ENCODE measurements at regions of chr2 and their contacts with region 1.

Region 1: GRCh38 chr2:69715964-69716363 is 26.0 kb upstream of the ANXA4 start:
- DNase-seq: no peak
- ATAC-seq: no peak
- H3K4me3 ChIP-seq: no peak overlapping the region
- H3K4me3 Mint-ChIP-seq: no peak overlapping the region
- H3K27ac ChIP-seq: no peak overlapping the region
- H3K27ac Mint-ChIP-seq: no peak overlapping the region
- H3K4me1 ChIP-seq: peaks cover 6% of the 10 kb centered on the region
- H3K4me1 Mint-ChIP-seq: peaks cover 6 to 7% of the 10 kb centered on the region in 2 donors
- H3K27me3 ChIP-seq: no peaks in the 10 kb centered on the region
- H3K27me3 Mint-ChIP-seq: no peaks in the 10 kb centered on the region
- CTCF ChIP-seq: no peak

Region 2: DNA sequence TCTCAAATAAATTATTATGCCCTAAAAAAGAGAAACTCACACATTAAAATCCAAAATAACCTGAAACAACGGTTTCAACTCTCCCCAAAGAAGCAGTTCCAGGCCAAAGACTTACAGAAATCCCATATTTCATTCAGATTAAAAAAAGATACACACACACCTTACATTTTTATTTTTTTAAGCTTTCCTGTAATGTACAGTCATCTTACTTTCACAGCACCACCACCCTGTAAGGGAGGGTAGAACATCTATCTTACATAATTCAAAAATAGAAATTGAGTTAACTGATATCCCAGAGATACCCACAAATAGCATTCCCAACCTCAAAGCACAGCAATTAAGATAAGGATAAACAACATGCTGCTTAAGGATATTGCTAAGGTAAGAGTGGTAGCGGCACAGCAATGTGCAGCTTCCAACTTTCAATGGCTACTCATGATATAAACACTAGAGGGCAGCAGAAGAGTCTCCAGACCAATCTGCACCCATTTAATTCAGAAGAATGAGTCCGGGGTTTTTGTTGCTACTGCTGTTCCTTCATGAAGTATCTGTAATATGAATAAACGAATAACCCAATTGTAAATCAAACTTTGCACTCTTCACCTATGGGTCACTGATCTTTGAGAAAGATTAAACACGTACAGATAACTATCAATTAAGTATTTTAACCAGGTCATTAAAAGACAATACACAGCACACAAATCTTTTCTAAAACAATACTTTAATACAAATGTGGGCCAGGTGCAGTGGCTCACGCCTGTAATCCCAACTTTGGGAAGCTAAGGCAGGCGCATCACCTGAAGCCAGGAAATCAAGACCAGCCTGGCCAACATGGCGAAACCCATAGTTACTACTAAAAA is 340.2 kb before region 1 on chr2:
- intact Hi-C with region 1: loop called (anchors 2 kb)
- DNase-seq: peak in 1 of 2 donors; percentile 60
- ATAC-seq: peak; percentile 55 to 70 (median 68)
- H3K4me3 ChIP-seq: no peak overlapping the region
- H3K4me3 Mint-ChIP-seq: no peak overlapping the region
- H3K27ac ChIP-seq: no peak overlapping the region
- H3K27ac Mint-ChIP-seq: peak overlapping the region; percentile 7 to 37
- H3K4me1 ChIP-seq: no peaks in the 10 kb centered on the region
- H3K4me1 Mint-ChIP-seq: peaks cover 9 to 17% of the 10 kb centered on the region in 2 donors
- H3K27me3 ChIP-seq: no peaks in the 10 kb centered on the region
- H3K27me3 Mint-ChIP-seq: no peaks in the 10 kb centered on the region
- CTCF ChIP-seq: peak; percentile 71

Region 3: GRCh38 chr2:69436938-69437750 is 278.8 kb before region 1 on chr2 and contains the start of gene NFU1:
- intact Hi-C with region 1: loop called (anchors 5 kb)
- DNase-seq: peak; percentile 89 to 93
- ATAC-seq: peak; percentile 89 to 94 (median 89)
- H3K4me3 ChIP-seq: peak within 1 kb of the TSS; percentile 88
- H3K4me3 Mint-ChIP-seq: peak within 1 kb of the TSS; percentile 94
- H3K27ac ChIP-seq: peak within 1 kb of the TSS; percentile 90
- H3K27ac Mint-ChIP-seq: peak within 1 kb of the TSS; percentile 96 to 98
- H3K4me1 ChIP-seq: peaks cover 20% of the 10 kb centered on the region
- H3K4me1 Mint-ChIP-seq: peaks cover 29 to 36% of the 10 kb centered on the region in 2 donors
- H3K27me3 ChIP-seq: no peaks in the 10 kb centered on the region
- H3K27me3 Mint-ChIP-seq: no peaks in the 10 kb centered on the region
- CTCF ChIP-seq: peak; percentile 28
- total RNA-seq, gene NFU1: 21.4 to 25.0 (median 23.6) TPM

Region 4: DNA sequence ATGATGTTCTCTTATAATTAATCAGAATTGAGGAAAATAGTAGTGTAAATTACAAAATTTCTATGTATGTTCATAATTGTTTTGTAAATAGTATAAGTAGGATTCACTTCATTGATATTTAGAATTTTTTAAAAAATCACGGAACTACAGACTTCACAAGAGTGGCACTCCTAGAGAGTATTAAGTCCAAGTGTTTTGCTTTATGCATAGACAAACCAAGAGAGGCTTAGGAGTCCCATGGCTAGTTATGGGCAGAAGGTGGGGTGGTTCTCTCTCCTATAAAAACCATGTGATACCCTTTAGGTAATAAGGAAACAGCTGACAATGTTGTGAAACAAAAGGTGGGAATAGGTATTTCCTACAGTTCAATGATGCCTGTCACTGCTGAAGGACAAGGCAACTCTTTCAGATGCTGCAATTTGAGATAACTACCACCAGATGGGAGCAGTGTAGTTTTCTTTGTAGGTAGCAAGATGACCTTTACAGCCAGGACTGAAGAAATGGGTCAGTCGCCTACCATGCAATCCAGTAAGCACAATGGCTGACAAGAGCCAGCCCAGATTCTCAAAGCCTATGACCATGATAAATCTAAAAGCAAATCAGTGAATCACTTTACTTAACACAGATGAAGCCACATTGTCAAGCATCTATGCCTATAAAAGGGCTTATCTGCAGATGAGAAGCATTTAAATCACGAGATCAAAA is 156.4 kb before region 1 on chr2:
- intact Hi-C with region 1: loop called (anchors 1 kb)
- DNase-seq: peak in 1 of 2 donors; percentile 65
- ATAC-seq: peak; percentile 61 to 84 (median 81)
- H3K4me3 ChIP-seq: no peak overlapping the region
- H3K4me3 Mint-ChIP-seq: no peak overlapping the region
- H3K27ac ChIP-seq: no peak overlapping the region
- H3K27ac Mint-ChIP-seq: peak overlapping the region; percentile 39 to 75
- H3K4me1 ChIP-seq: peaks cover 9% of the 10 kb centered on the region
- H3K4me1 Mint-ChIP-seq: peaks cover 77 to 83% of the 10 kb centered on the region in 2 donors
- H3K27me3 ChIP-seq: no peaks in the 10 kb centered on the region
- H3K27me3 Mint-ChIP-seq: no peaks in the 10 kb centered on the region
- CTCF ChIP-seq: peak; percentile 63

Measured in natural killer cell (primary cell).